ENCODE measurements at regions of chr6 and their contacts with region 1.

Region 1: GRCh38 chr6:42417641-42418112 is 34.0 kb downstream of the TRERF1 start:
- DNase-seq: peak; percentile 86
- ATAC-seq: peak; percentile 90
- H3K4me3 Mint-ChIP-seq: peak overlapping the region; percentile 35
- H3K27ac Mint-ChIP-seq: peak overlapping the region; percentile 67
- H3K4me1 Mint-ChIP-seq: peaks cover 61% of the 10 kb centered on the region
- H3K27me3 Mint-ChIP-seq: no peaks in the 10 kb centered on the region
- CTCF ChIP-seq: no peak

Region 2: DNA sequence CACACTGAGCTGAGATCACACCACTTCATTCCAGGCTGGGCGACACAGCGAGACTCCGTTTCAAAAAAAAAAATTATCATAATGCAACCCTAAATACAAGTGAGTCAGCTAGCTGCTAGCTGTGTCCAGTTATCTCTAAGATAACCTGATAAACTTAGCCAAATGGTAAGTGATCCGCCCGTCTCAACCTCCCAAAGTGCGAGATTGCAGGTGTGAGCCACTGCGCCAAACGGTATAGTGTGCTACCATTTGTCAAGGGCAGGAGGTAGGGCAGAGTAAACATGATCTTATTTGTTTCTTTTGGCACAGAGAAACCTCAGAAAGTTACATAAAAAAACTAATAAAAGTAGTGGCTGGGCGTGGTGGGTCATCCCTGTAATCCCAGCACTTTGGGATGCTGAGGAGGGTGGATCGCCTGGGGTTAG is 270.5 kb before region 1 on chr6:
- CTCF ChIA-PET with region 1: no interaction called
- POLR2A ChIA-PET with region 1: no interaction called
- intact Hi-C with region 1: no loop called
- DNase-seq: no peak
- ATAC-seq: no peak
- H3K4me3 Mint-ChIP-seq: no peak overlapping the region
- H3K27ac Mint-ChIP-seq: no peak overlapping the region
- H3K4me1 Mint-ChIP-seq: peaks cover 5% of the 10 kb centered on the region
- H3K27me3 Mint-ChIP-seq: peaks cover 10% of the 10 kb centered on the region
- CTCF ChIP-seq: no peak

Region 3: GRCh38 chr6:42158011-42158410 is 259.7 kb before region 1 on chr6:
- CTCF ChIA-PET with region 1: no interaction called
- POLR2A ChIA-PET with region 1: no interaction called
- intact Hi-C with region 1: no loop called
- DNase-seq: no peak
- ATAC-seq: no peak
- H3K4me3 Mint-ChIP-seq: no peak overlapping the region
- H3K27ac Mint-ChIP-seq: no peak overlapping the region
- H3K4me1 Mint-ChIP-seq: no peaks in the 10 kb centered on the region
- H3K27me3 Mint-ChIP-seq: peaks cover 1% of the 10 kb centered on the region
- CTCF ChIP-seq: no peak

Region 4: DNA sequence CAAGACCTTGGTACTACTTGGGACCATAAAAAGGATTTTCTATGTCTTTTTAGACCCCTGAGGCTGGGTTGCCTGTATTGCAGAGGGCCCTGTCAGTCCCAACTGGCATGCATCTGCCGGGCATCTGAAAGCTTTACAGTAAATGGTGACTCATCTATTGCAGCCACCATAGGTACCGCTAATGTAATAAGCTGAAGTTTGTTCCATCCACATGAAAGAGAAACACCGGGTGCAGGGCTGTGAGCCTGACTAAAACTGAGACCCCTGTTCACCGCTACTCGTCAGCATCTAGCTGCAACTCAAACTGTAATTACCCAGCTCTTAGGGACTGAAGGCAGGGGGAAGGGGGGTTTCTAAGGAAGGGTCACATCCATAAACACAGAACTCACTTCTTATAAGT is 15.5 kb before region 1 on chr6:
- CTCF ChIA-PET with region 1: interaction called, 15 read pairs
- POLR2A ChIA-PET with region 1: interaction called, 21 read pairs
- intact Hi-C with region 1: no loop called
- DNase-seq: peak; percentile 84
- ATAC-seq: peak; percentile 85
- H3K4me3 Mint-ChIP-seq: no peak overlapping the region
- H3K27ac Mint-ChIP-seq: peak overlapping the region; percentile 56
- H3K4me1 Mint-ChIP-seq: peaks cover 69% of the 10 kb centered on the region
- H3K27me3 Mint-ChIP-seq: no peaks in the 10 kb centered on the region
- CTCF ChIP-seq: no peak

Measured in activated CD8-positive, alpha-beta T cell treated with anti-CD3 and anti-CD28 coated beads for 36 hours (primary cell).